Endothelial cell of umbilical vein (primary cell): ENCODE measurements at regions of chr11 and their contacts with region 1.

Region 1: GRCh38 chr11:86041975-86042378 is 26.9 kb downstream of the PICALM start:
- DNase-seq: peak; percentile 95
- H3K4me3 ChIP-seq: no peak overlapping the region
- H3K27ac ChIP-seq: peak overlapping the region; percentile 55
- H3K4me1 ChIP-seq: peaks cover 20% of the 10 kb centered on the region
- H3K27me3 ChIP-seq: no peaks in the 10 kb centered on the region
- CTCF ChIP-seq: peak; percentile 66
- POLR2A ChIP-seq: no peak

Region 2: DNA sequence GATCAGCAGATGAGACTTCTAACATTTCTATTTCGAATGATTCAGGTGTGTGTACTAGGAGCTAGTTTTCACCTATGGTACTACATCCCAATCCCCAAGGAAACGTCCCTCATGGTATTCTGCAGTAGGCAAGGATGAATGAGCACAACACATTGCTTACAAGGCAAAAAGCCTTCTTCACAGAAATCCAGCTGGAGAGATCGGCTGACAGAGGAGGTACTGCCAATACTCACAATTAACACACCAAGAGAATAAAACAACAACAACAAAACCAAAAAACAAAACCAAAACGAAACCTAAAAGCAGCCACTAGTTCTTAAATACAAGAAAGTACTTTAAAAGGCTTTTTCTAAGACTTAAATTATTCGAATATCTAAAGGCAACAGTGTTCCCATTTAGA is 74.5 kb before region 1 on chr11:
- CTCF ChIA-PET with region 1: interaction called, 14 read pairs
- POLR2A ChIA-PET with region 1: no interaction called
- dilution Hi-C with region 1: no loop called
- intact Hi-C with region 1: no loop called
- DNase-seq: no peak
- H3K4me3 ChIP-seq: no peak overlapping the region
- H3K27ac ChIP-seq: no peak overlapping the region
- H3K4me1 ChIP-seq: peaks cover 31% of the 10 kb centered on the region
- H3K27me3 ChIP-seq: no peaks in the 10 kb centered on the region
- CTCF ChIP-seq: no peak
- POLR2A ChIP-seq: no peak

Region 3: DNA sequence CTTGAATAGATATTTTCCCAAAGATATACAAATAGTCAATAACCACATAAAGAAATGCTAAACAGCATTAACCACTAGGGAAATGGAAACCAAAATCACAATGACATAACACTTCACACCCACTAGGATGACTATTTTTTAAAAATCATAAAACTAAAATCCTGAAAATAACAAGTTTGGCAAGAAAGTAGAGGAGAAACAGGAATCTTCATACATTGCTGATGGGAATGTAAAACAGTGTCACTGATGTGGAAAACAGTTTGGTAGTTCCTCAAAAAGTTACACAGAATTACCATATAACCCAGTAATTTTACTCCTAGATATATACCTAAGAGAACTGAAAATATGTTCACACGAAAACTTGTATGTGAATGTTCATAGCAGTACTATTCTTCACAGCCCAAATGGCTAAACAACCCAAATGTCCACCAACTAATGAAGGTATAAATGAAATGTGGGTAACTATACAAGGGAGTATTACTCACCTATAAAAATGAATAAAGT is 14.4 kb after region 1 on chr11:
- CTCF ChIA-PET with region 1: interaction called, 55 read pairs
- POLR2A ChIA-PET with region 1: no interaction called
- dilution Hi-C with region 1: no loop called
- intact Hi-C with region 1: loop called (anchors 1 kb)
- DNase-seq: no peak
- H3K4me3 ChIP-seq: no peak overlapping the region
- H3K27ac ChIP-seq: no peak overlapping the region
- H3K4me1 ChIP-seq: peaks cover 11% of the 10 kb centered on the region
- H3K27me3 ChIP-seq: no peaks in the 10 kb centered on the region
- CTCF ChIP-seq: no peak
- POLR2A ChIP-seq: no peak

Region 4: GRCh38 chr11:86151174-86152005 is 109.4 kb after region 1 on chr11:
- CTCF ChIA-PET with region 1: interaction called, 10 read pairs
- POLR2A ChIA-PET with region 1: no interaction called
- dilution Hi-C with region 1: no loop called
- intact Hi-C with region 1: loop called (anchors 1 kb)
- DNase-seq: peak; percentile 68
- H3K4me3 ChIP-seq: no peak overlapping the region
- H3K27ac ChIP-seq: peak overlapping the region; percentile 94
- H3K4me1 ChIP-seq: peaks cover 24% of the 10 kb centered on the region
- H3K27me3 ChIP-seq: no peaks in the 10 kb centered on the region
- CTCF ChIP-seq: no peak
- POLR2A ChIP-seq: no peak

Region 5: GRCh38 chr11:86202013-86202336 is 160.0 kb after region 1 on chr11:
- CTCF ChIA-PET with region 1: interaction called, 213 read pairs
- POLR2A ChIA-PET with region 1: no interaction called
- dilution Hi-C with region 1: loop called (anchors 25 kb)
- intact Hi-C with region 1: loop called (anchors 2 kb)
- DNase-seq: no peak
- H3K4me3 ChIP-seq: peak overlapping the region in 1 of 3 experiments; percentile 53
- H3K27ac ChIP-seq: peak overlapping the region; percentile 30
- H3K4me1 ChIP-seq: peaks cover 9% of the 10 kb centered on the region
- H3K27me3 ChIP-seq: no peaks in the 10 kb centered on the region
- CTCF ChIP-seq: no peak
- POLR2A ChIP-seq: no peak

Region 6: DNA sequence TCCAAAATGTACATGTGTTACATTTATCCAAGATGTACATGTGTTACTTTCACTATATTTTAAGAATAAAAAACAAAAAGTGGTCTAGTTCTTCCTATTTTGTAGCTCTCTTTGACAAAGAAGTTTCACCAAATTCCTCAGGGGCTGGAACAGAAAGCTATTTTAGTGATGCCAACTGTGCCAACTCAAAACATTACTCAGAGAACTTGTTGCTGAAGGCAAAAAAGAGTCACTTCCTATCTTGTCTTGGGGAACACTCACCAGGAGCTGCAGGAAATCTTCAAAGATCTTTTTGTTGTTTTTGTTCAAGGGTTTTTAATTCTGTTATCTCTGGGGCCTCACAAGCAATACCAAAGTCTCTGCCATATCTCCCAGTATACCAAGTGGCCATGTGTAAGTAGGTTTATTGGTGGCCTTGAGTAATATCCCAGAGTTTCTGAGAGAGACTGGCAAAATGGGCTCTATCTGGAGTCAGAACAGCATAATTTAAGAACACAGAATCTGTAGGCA is 189.0 kb after region 1 on chr11:
- CTCF ChIA-PET with region 1: interaction called, 25 read pairs
- POLR2A ChIA-PET with region 1: no interaction called
- dilution Hi-C with region 1: no loop called
- intact Hi-C with region 1: no loop called
- DNase-seq: no peak
- H3K4me3 ChIP-seq: no peak overlapping the region
- H3K27ac ChIP-seq: no peak overlapping the region
- H3K4me1 ChIP-seq: no peaks in the 10 kb centered on the region
- H3K27me3 ChIP-seq: no peaks in the 10 kb centered on the region
- CTCF ChIP-seq: no peak
- POLR2A ChIP-seq: no peak

Region 7: GRCh38 chr11:86861810-86862209 is 819.8 kb after region 1 on chr11:
- CTCF ChIA-PET with region 1: no interaction called
- POLR2A ChIA-PET with region 1: no interaction called
- dilution Hi-C with region 1: no loop called
- intact Hi-C with region 1: no loop called
- DNase-seq: no peak
- H3K4me3 ChIP-seq: no peak overlapping the region
- H3K27ac ChIP-seq: no peak overlapping the region
- H3K4me1 ChIP-seq: no peaks in the 10 kb centered on the region
- H3K27me3 ChIP-seq: no peaks in the 10 kb centered on the region
- CTCF ChIP-seq: no peak
- POLR2A ChIP-seq: no peak